Transverse colon (tissue), 4 donors: ENCODE measurements at regions of chr16 and their contacts with region 1.

Region 1: DNA sequence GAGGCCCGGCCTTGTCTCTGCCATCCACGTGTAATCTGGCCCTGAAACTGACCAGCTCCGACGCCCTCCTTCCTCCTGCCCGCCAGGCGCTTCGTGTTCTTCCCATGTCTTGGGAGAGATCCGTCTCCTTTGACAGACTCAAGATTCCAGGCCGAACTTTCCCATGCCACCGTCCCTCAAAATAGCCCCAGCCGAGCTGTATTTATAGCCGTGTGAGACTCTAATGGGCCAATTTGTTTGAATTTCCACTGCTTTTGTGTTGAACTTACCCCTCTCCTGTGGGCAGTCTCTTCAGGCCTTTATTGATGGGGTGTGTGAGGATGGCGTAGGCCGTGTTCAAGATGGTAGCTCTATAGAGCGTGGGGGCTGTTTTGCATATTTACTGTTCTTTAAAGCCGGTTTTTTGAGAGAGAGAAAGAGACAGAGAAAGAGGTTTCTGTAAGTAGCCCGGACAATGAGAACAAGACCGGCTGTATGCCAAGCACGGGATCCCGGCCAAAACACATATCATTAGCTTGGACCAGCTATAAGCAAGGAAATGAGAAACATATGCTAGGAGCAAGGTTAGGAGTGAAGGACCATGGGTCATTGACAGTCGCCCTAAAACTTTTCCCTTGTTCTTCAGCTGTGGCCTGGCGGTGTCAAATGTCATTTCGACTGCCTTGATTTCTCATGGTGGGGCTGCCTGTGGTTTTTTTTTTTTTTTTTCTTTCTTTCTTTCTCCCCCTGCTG is 124.5 kb upstream of the ZFHX3 start:
- DNase-seq: peak; percentile 86
- H3K4me3 ChIP-seq: no peak overlapping the region
- H3K27ac ChIP-seq: peak overlapping the region; percentile 49 to 72 (median 61)
- H3K4me1 ChIP-seq: peaks cover 0 to 32% (median 26%) of the 10 kb centered on the region in 4 donors
- H3K27me3 ChIP-seq: no peaks in the 10 kb centered on the region
- CTCF ChIP-seq: peak in 3 of 5 experiments; percentile 28 to 54 (median 54)
- EP300 ChIP-seq: no peak
- POLR2A ChIP-seq: no peak

Region 2: GRCh38 chr16:72847187-72848027 is 325.0 kb before region 1 on chr16:
- in situ Hi-C with region 1: loop called (anchors 25 kb)
- intact Hi-C with region 1: loop called (anchors 10 kb)
- DNase-seq: no peak
- H3K4me3 ChIP-seq: no peak overlapping the region
- H3K27ac ChIP-seq: peak overlapping the region; percentile 33 to 72 (median 54)
- H3K4me1 ChIP-seq: peaks cover 11 to 21% (median 16%) of the 10 kb centered on the region in 4 donors
- H3K27me3 ChIP-seq: no peaks in the 10 kb centered on the region
- CTCF ChIP-seq: peak in 3 of 5 experiments; percentile 17 to 27 (median 27)
- EP300 ChIP-seq: no peak
- POLR2A ChIP-seq: no peak

Region 3: DNA sequence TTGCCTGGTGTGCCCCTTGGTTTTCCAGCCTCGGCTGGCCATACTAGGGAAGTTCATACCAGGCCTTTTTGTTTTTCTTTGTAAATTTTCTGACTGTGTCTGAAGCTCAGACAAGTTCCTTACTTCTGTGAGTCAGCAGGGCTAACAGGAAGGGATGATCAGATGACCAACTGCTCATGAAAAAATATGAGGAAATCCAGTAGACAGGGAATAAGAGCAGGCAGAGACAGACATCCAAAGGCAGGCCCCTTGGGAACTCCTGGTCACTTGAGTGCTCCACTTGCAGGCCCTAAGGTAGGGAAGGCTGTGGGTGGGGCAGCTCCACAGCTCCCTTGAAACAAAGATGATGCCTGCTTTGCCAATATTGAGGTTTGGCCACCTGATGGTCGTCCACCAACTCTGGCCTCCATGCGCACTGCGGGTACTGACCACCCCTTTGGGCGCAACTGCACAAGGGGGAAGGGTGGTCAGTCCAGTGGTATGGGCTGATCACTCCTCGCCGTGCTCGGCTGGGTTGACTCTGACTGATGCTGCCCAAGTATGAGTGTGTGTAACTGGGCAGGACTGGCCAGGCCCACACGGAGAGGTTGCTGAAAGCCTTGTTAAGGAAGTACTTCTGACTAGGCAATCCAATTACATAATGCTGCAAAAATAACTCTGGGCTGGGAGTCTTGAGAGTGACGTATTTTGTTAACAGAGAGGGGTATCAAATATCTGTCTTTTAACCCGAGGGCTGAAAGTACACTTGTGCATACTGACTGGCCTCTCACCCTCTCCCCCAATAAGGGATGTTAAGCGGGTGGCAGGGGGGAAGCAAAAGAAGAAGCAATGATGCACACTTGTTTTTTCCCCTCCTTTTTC is 103.6 kb before region 1 on chr16:
- in situ Hi-C with region 1: loop called in 1 of 4 experiments (anchors 5 kb)
- intact Hi-C with region 1: loop called (anchors 10 kb)
- DNase-seq: peak; percentile 57
- H3K4me3 ChIP-seq: no peak overlapping the region
- H3K27ac ChIP-seq: peak overlapping the region; percentile 69 to 91 (median 78)
- H3K4me1 ChIP-seq: peaks cover 33 to 82% (median 60%) of the 10 kb centered on the region in 4 donors
- H3K27me3 ChIP-seq: peaks cover 32% of the 10 kb centered on the region
- CTCF ChIP-seq: no peak
- EP300 ChIP-seq: no peak
- POLR2A ChIP-seq: peak; percentile 11